Naive thymus-derived CD4-positive, alpha-beta T cell (primary cell): ENCODE measurements at regions of chr1 and their contacts with region 1.

Region 1: DNA sequence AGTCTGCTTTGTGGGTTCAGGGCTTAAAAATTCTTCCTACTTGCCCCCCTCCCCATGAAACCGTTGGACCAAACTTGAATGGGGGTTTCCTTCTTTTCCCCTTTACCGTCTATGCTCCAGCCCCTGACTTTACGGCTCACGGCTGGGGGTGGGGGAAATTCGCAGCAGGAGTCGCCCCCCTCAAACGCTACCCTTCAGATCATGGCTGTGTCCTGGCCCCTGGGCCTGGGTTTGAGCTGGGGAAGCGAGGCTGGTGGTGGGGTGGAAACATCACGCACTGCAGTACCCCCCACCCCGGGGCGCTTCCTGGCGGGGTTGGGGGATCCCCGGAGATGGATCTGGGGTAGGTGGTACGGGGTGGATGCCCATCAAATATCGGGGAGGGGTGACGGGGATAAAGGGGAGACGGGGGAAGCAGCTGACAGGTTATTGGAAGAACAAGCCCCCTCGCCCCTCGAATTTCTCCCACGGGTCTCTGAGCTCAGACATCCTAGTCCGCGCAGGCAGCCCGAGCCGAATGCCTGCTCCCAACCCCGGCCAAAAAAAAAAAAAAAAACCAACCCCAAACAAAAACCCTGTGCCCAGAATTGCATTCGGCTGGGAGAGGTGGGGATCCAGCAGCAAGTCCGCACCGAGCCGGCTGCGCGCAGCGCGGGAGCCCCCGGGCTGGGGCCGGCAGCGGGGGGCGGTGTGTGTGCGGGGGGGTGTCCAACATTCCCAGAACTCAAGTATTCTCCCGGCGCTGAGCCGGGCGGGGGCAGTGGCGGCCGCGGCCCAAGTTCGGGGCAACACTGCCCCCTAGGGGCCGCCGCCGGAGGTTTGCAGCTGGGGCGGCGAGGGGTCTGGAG is 59.0 kb upstream of the ACOT11 start:
- DNase-seq: peak; percentile 54 to 88 (median 73)
- ATAC-seq: peak; percentile 82
- H3K4me3 ChIP-seq: peak overlapping the region; percentile 83
- H3K4me3 Mint-ChIP-seq: peak overlapping the region; percentile 85 to 95 (median 90)
- H3K27ac ChIP-seq: peak overlapping the region; percentile 75
- H3K27ac Mint-ChIP-seq: peak overlapping the region; percentile 51 to 93 (median 78)
- H3K4me1 ChIP-seq: peaks cover 25 to 33% of the 10 kb centered on the region in 2 donors
- H3K4me1 Mint-ChIP-seq: peaks cover 26 to 55% (median 41%) of the 10 kb centered on the region in 7 donors
- H3K27me3 ChIP-seq: no peaks in the 10 kb centered on the region
- H3K27me3 Mint-ChIP-seq: peaks cover 0 to 38% (median 0%) of the 10 kb centered on the region in 5 donors

Region 2: DNA sequence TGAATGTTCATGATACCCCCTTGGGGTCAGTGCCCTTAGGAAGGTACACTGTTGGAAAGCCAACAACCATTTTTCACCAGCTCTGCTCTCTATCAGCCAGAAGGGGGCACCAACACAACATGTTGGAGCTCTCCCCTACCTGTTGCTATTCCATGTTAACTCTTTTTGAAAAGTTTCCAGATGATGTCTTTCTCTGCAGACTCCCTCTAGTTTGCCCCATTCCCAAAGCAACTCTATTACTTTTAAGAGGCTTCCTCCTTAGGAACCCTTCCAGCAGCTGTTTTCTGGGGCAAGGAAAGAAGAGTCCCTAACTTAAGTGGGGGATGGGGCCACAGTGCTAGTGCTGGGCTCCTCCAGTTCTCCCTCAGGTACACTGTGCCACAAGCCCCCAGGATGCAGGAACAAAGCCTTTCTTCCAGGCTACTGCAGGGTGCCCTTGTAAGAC is 628.0 kb before region 1 on chr1:
- CTCF ChIA-PET with region 1: no interaction called
- POLR2A ChIA-PET with region 1: no interaction called
- intact Hi-C with region 1: loop called in 1 of 2 experiments (anchors 1 kb)
- DNase-seq: peak in 7 of 9 donors; percentile 43 to 63 (median 53)
- ATAC-seq: peak; percentile 86
- H3K4me3 ChIP-seq: no peak overlapping the region
- H3K4me3 Mint-ChIP-seq: no peak overlapping the region
- H3K27ac ChIP-seq: no peak overlapping the region
- H3K27ac Mint-ChIP-seq: peak overlapping the region in 3 of 9 donors; percentile 29 to 68 (median 34)
- H3K4me1 ChIP-seq: no peaks in the 10 kb centered on the region
- H3K4me1 Mint-ChIP-seq: peaks cover 0 to 9% (median 8%) of the 10 kb centered on the region in 7 donors
- H3K27me3 ChIP-seq: no peaks in the 10 kb centered on the region
- H3K27me3 Mint-ChIP-seq: no peaks in the 10 kb centered on the region

Region 3: DNA sequence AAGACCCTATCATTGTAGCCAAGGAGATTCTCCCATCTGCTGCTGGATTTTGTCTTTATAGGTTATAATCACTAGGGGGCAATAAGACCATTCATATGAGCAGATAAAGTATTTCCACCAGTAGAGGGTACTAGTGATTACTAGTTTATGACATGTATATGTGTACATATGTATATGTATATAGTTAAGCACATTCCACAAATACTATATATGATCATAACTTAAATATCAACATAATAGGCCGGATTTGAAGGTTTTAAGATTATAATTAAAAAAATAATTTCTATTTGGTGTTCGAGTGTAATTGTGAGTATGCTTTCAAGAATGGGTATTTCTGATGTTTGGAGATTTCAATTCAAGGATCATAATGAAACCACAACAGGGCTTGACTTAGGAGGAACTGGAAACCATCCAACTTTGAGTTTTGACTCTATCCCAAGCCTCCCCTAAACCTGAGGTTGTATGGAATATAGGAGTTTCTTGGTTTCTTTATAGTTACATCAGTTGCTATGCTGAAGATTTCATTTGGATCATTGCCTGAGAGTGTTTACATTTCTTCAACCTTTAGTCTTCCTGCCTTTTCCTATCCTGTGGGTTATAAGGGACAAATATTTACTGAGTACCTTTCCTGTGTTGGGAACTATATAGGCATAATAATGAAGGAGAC is 418.7 kb before region 1 on chr1:
- CTCF ChIA-PET with region 1: interaction called, 10 read pairs
- POLR2A ChIA-PET with region 1: no interaction called
- intact Hi-C with region 1: loop called (anchors 1 kb)
- DNase-seq: peak in 7 of 9 donors; percentile 11 to 66 (median 54)
- ATAC-seq: peak; percentile 100
- H3K4me3 ChIP-seq: no peak overlapping the region
- H3K4me3 Mint-ChIP-seq: no peak overlapping the region
- H3K27ac ChIP-seq: no peak overlapping the region
- H3K27ac Mint-ChIP-seq: peak overlapping the region in 1 of 9 donors; percentile 16
- H3K4me1 ChIP-seq: no peaks in the 10 kb centered on the region
- H3K4me1 Mint-ChIP-seq: peaks cover 0 to 6% (median 0%) of the 10 kb centered on the region in 7 donors
- H3K27me3 ChIP-seq: no peaks in the 10 kb centered on the region
- H3K27me3 Mint-ChIP-seq: no peaks in the 10 kb centered on the region

Region 4: DNA sequence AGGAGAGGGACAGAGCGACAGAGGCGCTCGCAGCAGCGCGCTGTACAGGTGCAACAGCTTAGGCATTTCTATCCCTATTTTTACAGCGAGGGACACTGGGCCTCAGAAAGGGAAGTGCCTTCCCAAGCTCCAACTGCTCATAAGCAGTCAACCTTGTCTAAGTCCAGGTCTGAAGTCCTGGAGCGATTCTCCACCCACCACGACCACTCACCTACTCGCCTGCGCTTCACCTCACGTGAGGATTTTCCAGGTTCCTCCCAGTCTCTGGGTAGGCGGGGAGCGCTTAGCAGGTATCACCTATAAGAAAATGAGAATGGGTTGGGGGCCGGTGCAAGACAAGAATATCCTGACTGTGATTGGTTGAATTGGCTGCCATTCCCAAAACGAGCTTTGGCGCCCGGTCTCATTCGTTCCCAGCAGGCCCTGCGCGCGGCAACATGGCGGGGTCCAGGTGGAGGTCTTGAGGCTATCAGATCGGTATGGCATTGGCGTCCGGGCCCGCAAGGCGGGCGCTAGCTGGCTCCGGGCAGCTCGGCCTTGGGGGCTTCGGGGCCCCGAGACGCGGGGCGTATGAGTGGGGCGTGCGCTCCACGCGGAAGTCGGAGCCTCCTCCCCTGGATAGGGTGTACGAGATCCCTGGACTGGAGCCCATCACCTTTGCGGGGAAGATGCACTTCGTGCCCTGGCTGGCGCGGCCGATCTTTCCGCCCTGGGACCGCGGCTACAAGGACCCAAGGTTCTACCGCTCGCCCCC is 289.1 kb before region 1 on chr1 and contains the starts of genes CYB5RL and MRPL37:
- CTCF ChIA-PET with region 1: interaction called, 9 read pairs
- POLR2A ChIA-PET with region 1: interaction called, 8 read pairs
- intact Hi-C with region 1: loop called (anchors 1 kb)
- DNase-seq: peak; percentile 65 to 94 (median 91)
- ATAC-seq: peak; percentile 99
- H3K4me3 ChIP-seq: peak within 1 kb of the TSS; percentile 69
- H3K4me3 Mint-ChIP-seq: peak within 1 kb of the TSS; percentile 90 to 96 (median 92)
- H3K27ac ChIP-seq: peak within 1 kb of the TSS; percentile 81
- H3K27ac Mint-ChIP-seq: peak within 1 kb of the TSS; percentile 64 to 93 (median 87)
- H3K4me1 ChIP-seq: peaks cover 9 to 17% of the 10 kb centered on the region in 2 donors
- H3K4me1 Mint-ChIP-seq: peaks cover 27 to 44% (median 40%) of the 10 kb centered on the region in 7 donors
- H3K27me3 ChIP-seq: no peaks in the 10 kb centered on the region
- H3K27me3 Mint-ChIP-seq: no peaks in the 10 kb centered on the region
- total RNA-seq, gene CYB5RL: 5.1 to 13.5 (median 7.1) TPM
- total RNA-seq, gene MRPL37: 25.4 to 86.7 (median 36.4) TPM

Region 5: GRCh38 chr1:54355931-54356679 is 132.9 kb before region 1 on chr1:
- CTCF ChIA-PET with region 1: interaction called, 3 read pairs
- POLR2A ChIA-PET with region 1: interaction called, 3 read pairs
- intact Hi-C with region 1: loop called (anchors 1 kb)
- DNase-seq: peak in 7 of 9 donors; percentile 7 to 31 (median 24)
- ATAC-seq: peak; percentile 12
- H3K4me3 ChIP-seq: peak overlapping the region; percentile 56
- H3K4me3 Mint-ChIP-seq: peak overlapping the region; percentile 86 to 98 (median 91)
- H3K27ac ChIP-seq: peak overlapping the region; percentile 76
- H3K27ac Mint-ChIP-seq: peak overlapping the region; percentile 87 to 99 (median 97)
- H3K4me1 ChIP-seq: peaks cover 3 to 67% of the 10 kb centered on the region in 2 donors
- H3K4me1 Mint-ChIP-seq: peaks cover 72 to 97% (median 94%) of the 10 kb centered on the region in 7 donors
- H3K27me3 ChIP-seq: no peaks in the 10 kb centered on the region
- H3K27me3 Mint-ChIP-seq: no peaks in the 10 kb centered on the region

Region 6: GRCh38 chr1:54474639-54475251 is 14.3 kb before region 1 on chr1:
- CTCF ChIA-PET with region 1: interaction called, 9 read pairs
- POLR2A ChIA-PET with region 1: interaction called, 22 read pairs
- intact Hi-C with region 1: loop called in 1 of 2 experiments (anchors 1 kb)
- DNase-seq: peak in 3 of 9 donors; percentile 26 to 40 (median 34)
- ATAC-seq: peak; percentile 44
- H3K4me3 ChIP-seq: peak overlapping the region; percentile 53
- H3K4me3 Mint-ChIP-seq: peak overlapping the region; percentile 65 to 89 (median 83)
- H3K27ac ChIP-seq: peak overlapping the region; percentile 64
- H3K27ac Mint-ChIP-seq: peak overlapping the region in 8 of 9 donors; percentile 80 to 98 (median 92)
- H3K4me1 ChIP-seq: peaks cover 31 to 34% of the 10 kb centered on the region in 2 donors
- H3K4me1 Mint-ChIP-seq: peaks cover 24 to 62% (median 55%) of the 10 kb centered on the region in 7 donors
- H3K27me3 ChIP-seq: no peaks in the 10 kb centered on the region
- H3K27me3 Mint-ChIP-seq: peaks cover 0 to 27% (median 0%) of the 10 kb centered on the region in 5 donors

Region 7: DNA sequence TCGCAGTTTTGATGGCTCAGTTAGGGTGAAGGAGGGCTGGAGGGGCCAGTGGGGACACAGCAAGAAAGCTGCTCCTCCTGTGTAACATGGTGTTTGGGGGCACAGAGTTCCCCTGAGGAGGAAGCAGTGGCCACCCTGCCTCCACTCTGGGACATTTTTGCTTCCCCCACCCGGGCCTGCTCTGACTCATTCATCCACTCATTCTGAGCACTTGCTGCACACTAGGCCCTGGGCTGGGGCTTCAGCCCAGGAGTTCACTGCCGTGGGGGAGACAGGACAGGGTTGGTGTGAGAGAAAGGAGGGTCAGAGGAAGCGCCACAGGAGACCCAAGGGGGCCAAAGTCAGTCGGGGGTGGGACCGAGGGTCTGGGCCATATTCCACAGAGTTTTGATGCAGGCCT is 17.6 kb after region 1 on chr1:
- CTCF ChIA-PET with region 1: no interaction called
- POLR2A ChIA-PET with region 1: no interaction called
- intact Hi-C with region 1: no loop called
- DNase-seq: no peak
- ATAC-seq: no peak
- H3K4me3 ChIP-seq: no peak overlapping the region
- H3K4me3 Mint-ChIP-seq: no peak overlapping the region
- H3K27ac ChIP-seq: no peak overlapping the region
- H3K27ac Mint-ChIP-seq: peak overlapping the region in 1 of 9 donors; percentile 34
- H3K4me1 ChIP-seq: no peaks in the 10 kb centered on the region
- H3K4me1 Mint-ChIP-seq: no peaks in the 10 kb centered on the region
- H3K27me3 ChIP-seq: no peaks in the 10 kb centered on the region
- H3K27me3 Mint-ChIP-seq: peaks cover 6 to 16% (median 12%) of the 10 kb centered on the region in 5 donors

Region 8: GRCh38 chr1:54886724-54887664 is 398.0 kb after region 1 on chr1 and contains the start of gene DHCR24:
- CTCF ChIA-PET with region 1: no interaction called
- POLR2A ChIA-PET with region 1: no interaction called
- intact Hi-C with region 1: loop called in 1 of 2 experiments (anchors 1 kb)
- DNase-seq: peak; percentile 43 to 90 (median 58)
- ATAC-seq: peak; percentile 93
- H3K4me3 ChIP-seq: peak within 1 kb of the TSS; percentile 66
- H3K4me3 Mint-ChIP-seq: peak within 1 kb of the TSS; percentile 89 to 99 (median 96)
- H3K27ac ChIP-seq: peak within 1 kb of the TSS; percentile 27
- H3K27ac Mint-ChIP-seq: peak within 1 kb of the TSS; percentile 25 to 89 (median 73)
- H3K4me1 ChIP-seq: peaks cover 0 to 11% of the 10 kb centered on the region in 2 donors
- H3K4me1 Mint-ChIP-seq: peaks cover 13 to 55% (median 37%) of the 10 kb centered on the region in 7 donors
- H3K27me3 ChIP-seq: no peaks in the 10 kb centered on the region
- H3K27me3 Mint-ChIP-seq: peaks cover 0 to 18% (median 3%) of the 10 kb centered on the region in 5 donors
- total RNA-seq, gene DHCR24: 2.7 to 103 (median 8.3) TPM